Caco-2 (cell line): ENCODE measurements at regions of chr2 and their contacts with region 1.

Region 1: GRCh38 chr2:241692448-241692847 is 5.8 kb upstream of the DTYMK start:
- DNase-seq: no peak
- H3K4me3 ChIP-seq: no peak overlapping the region
- H3K4me3 Mint-ChIP-seq: no peak overlapping the region
- H3K27ac Mint-ChIP-seq: no peak overlapping the region
- H3K4me1 ChIP-seq: peaks cover 4% of the 10 kb centered on the region; the same call in 1 of the 2 replicates
- H3K4me1 Mint-ChIP-seq: no peaks in the 10 kb centered on the region
- H3K27me3 ChIP-seq: no peaks in the 10 kb centered on the region
- H3K27me3 Mint-ChIP-seq: no peaks in the 10 kb centered on the region
- CTCF ChIP-seq: no peak

Region 2: DNA sequence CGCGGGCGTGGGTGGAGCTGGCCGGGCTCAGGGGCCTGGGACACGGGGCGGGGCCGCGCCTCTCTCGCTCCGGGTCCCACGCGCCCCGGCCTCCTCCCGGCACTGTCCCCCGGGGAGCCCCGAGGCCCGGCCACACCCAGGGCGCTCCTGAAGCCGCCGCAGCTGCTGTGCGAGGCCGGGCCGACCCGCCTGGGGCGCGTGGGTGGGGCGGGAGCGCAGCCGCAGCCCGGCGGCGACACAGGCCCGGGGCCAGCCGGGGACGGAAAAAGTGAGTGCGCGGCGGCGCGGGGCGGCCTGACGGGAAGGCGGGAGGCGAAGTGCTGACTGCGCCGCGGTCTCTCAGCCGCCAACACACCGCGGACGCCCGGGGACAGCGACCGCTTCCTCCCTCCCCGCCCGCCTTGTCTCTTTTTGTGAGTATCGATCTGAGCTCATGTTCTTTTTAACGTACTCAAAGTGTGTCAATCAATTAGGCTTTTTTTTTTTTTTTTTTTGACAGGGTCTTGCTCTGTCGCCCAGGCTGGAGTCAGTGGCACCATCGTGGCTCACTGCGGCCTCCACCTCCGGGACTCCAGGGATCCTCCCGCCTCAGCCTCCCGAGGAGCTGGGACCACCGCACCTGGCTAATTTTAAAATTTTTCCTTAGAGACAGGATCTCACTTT is 151.7 kb after region 1 on chr2:
- CTCF ChIA-PET with region 1: no interaction called
- POLR2A ChIA-PET with region 1: interaction called, 10 read pairs
- intact Hi-C with region 1: no loop called
- DNase-seq: peak; percentile 54 to 79
- H3K4me3 ChIP-seq: peak overlapping the region; percentile 32
- H3K4me3 Mint-ChIP-seq: peak overlapping the region; percentile 68
- H3K27ac Mint-ChIP-seq: no peak overlapping the region
- H3K4me1 ChIP-seq: peaks cover 5% of the 10 kb centered on the region; the same call in 1 of the 2 replicates
- H3K4me1 Mint-ChIP-seq: no peaks in the 10 kb centered on the region
- H3K27me3 ChIP-seq: no peaks in the 10 kb centered on the region
- H3K27me3 Mint-ChIP-seq: no peaks in the 10 kb centered on the region
- CTCF ChIP-seq: no peak

Region 3: DNA sequence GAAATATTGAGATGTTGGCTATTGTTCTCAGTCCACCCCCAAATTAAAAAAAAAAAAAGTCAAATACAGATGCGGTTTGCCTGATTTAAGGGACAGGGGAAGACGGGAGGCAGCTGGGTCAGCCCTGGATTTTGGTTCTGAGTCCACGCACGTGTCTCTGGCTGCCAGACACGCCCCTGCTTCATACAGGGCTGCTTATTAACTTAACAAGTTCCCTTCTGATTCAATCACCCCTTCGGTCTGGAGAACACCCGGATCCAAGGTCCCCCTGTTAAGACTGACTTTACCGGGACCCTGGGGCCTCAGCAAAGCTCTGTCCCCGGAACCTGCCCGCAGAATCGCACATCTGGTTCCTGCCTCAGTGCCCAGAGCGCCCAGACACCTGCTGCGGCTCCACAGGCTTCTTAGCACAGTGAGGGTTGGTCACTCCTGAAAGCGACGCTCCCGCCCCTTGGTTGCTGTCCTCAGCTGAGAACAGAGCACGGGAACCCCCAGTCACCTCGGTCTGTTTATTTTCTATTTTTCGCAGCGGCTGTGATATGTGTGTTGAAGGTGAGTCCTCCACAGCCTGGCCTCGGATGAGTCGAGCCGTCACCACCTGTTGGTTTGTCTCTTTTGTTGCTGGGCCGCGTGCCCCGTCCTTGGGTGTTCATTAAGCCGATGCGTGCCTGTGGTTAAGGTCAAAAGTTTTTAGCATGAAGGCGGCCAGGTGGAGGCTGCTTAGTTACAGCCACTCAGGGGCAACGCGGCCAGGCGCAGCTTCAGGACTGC is 234.3 kb after region 1 on chr2:
- CTCF ChIA-PET with region 1: no interaction called
- POLR2A ChIA-PET with region 1: no interaction called
- intact Hi-C with region 1: no loop called
- DNase-seq: no peak
- H3K4me3 ChIP-seq: no peak overlapping the region
- H3K4me3 Mint-ChIP-seq: no peak overlapping the region
- H3K27ac Mint-ChIP-seq: no peak overlapping the region
- H3K4me1 ChIP-seq: peaks cover 4% of the 10 kb centered on the region; the same call in 1 of the 2 replicates
- H3K4me1 Mint-ChIP-seq: no peaks in the 10 kb centered on the region
- H3K27me3 ChIP-seq: no peaks in the 10 kb centered on the region
- H3K27me3 Mint-ChIP-seq: no peaks in the 10 kb centered on the region
- CTCF ChIP-seq: no peak